ENCODE measurements at regions of chr12 and their contacts with region 1.

Region 1: GRCh38 chr12:3299929-3300832 is 190.8 kb upstream of the PRMT8 start:
- DNase-seq: peak; percentile 90 to 93 (median 93)
- ATAC-seq: peak; percentile 61 to 69
- H3K4me3 ChIP-seq: peak overlapping the region; percentile 2
- H3K27ac ChIP-seq: no peak overlapping the region
- H3K4me1 ChIP-seq: peaks cover 5% of the 10 kb centered on the region
- H3K27me3 ChIP-seq: no peaks in the 10 kb centered on the region

Region 2: DNA sequence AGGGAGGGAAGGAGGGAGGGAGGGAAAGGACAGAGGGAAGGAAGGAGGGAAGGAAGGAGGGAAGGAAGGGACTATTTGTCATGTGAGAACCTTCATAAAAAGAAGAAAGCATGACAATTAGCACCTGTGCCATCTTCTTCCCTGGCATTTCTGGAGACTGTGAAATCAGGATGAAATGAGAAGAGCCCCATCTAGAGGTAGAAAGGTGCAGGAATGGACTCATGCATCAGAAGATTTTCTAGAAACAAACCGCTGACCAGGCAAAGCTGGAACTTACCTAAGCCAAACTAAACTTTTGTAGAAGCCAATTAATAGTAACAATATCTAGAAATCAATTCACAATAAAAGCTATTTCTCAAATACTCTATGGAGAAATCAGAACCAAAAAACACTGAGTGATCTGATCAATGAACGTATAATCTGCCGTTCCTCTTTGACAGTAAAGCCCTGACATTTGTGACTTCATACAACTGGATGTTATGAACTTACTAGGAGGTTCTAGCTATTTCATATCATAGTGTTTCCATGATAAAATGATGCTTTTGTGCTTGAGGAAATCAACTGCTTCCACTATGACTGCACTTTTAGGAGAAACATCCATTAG is 477.1 kb after region 1 on chr12:
- intact Hi-C with region 1: loop called in 3 of 4 experiments (anchors 5 to 10 kb)
- DNase-seq: no peak
- ATAC-seq: peak; percentile 63 to 76
- H3K4me3 ChIP-seq: no peak overlapping the region
- H3K27ac ChIP-seq: no peak overlapping the region
- H3K4me1 ChIP-seq: no peaks in the 10 kb centered on the region
- H3K27me3 ChIP-seq: no peaks in the 10 kb centered on the region

Region 3: GRCh38 chr12:3803865-3804472 is 503.8 kb after region 1 on chr12:
- intact Hi-C with region 1: loop called in 3 of 4 experiments (anchors 5 kb)
- DNase-seq: peak; percentile 77 to 86 (median 78)
- ATAC-seq: peak; percentile 83 to 85
- H3K4me3 ChIP-seq: no peak overlapping the region
- H3K27ac ChIP-seq: no peak overlapping the region
- H3K4me1 ChIP-seq: no peaks in the 10 kb centered on the region
- H3K27me3 ChIP-seq: no peaks in the 10 kb centered on the region

Region 4: DNA sequence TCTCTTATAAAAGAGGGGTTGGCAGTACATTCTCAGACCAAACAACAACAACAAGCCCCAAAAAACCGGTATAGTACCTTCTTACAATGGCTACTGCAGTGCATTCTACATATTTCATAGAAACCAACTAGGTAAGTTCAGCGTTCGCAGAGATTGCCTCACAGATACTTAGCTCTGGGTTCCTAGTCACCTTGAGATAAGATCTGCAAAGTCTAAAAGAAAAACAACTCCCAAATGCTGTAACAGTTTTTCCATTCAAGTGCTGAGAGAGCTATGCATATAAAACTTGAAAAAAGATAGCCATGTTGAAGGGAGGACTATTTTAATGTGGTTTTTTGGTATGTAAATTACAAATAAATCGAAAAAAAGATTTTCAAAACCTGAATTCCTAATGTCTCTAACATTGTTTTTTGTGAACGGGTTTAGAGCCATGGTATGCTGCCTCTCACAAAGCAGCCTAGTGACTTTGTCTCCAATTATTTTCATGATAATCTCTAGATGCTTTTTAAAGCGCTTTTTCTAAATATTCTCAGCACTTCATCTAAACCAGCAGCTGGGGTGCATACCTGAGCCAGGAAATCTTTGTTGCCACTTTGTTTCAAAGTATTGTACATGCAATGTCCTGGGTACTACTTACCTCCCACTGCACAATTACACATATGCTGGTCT is 509.3 kb after region 1 on chr12:
- intact Hi-C with region 1: loop called in 3 of 4 experiments (anchors 5 kb)
- DNase-seq: no peak
- ATAC-seq: no peak
- H3K4me3 ChIP-seq: no peak overlapping the region
- H3K27ac ChIP-seq: no peak overlapping the region
- H3K4me1 ChIP-seq: no peaks in the 10 kb centered on the region
- H3K27me3 ChIP-seq: no peaks in the 10 kb centered on the region

Measured in right cardiac atrium (tissue), 5 donors.